ENCODE measurements at regions of chr10 and their contacts with region 1.

Region 1: GRCh38 chr10:48551861-48552591 is 52.8 kb downstream of the ARHGAP22 start:
- DNase-seq: peak; percentile 45
- H3K4me3 ChIP-seq: no peak overlapping the region
- H3K27ac ChIP-seq: no peak overlapping the region
- H3K4me1 ChIP-seq: peaks cover 6% of the 10 kb centered on the region
- H3K27me3 ChIP-seq: no peaks in the 10 kb centered on the region
- CTCF ChIP-seq: peak; percentile 57 to 66 (median 60)
- POLR2A ChIP-seq: no peak

Region 2: GRCh38 chr10:48656241-48656913 is 104.4 kb after region 1 on chr10:
- intact Hi-C with region 1: loop called (anchors 5 kb)
- DNase-seq: peak; percentile 94
- H3K4me3 ChIP-seq: peak overlapping the region; percentile 51 to 63
- H3K27ac ChIP-seq: no peak overlapping the region
- H3K4me1 ChIP-seq: peaks cover 8% of the 10 kb centered on the region
- H3K27me3 ChIP-seq: no peaks in the 10 kb centered on the region
- CTCF ChIP-seq: peak; percentile 97 to 99 (median 99)
- POLR2A ChIP-seq: no peak

Measured in testis (tissue), 5 donors.